GM10248 (cell line): ENCODE measurements at regions of chr2 and their contacts with region 1.

Region 1: DNA sequence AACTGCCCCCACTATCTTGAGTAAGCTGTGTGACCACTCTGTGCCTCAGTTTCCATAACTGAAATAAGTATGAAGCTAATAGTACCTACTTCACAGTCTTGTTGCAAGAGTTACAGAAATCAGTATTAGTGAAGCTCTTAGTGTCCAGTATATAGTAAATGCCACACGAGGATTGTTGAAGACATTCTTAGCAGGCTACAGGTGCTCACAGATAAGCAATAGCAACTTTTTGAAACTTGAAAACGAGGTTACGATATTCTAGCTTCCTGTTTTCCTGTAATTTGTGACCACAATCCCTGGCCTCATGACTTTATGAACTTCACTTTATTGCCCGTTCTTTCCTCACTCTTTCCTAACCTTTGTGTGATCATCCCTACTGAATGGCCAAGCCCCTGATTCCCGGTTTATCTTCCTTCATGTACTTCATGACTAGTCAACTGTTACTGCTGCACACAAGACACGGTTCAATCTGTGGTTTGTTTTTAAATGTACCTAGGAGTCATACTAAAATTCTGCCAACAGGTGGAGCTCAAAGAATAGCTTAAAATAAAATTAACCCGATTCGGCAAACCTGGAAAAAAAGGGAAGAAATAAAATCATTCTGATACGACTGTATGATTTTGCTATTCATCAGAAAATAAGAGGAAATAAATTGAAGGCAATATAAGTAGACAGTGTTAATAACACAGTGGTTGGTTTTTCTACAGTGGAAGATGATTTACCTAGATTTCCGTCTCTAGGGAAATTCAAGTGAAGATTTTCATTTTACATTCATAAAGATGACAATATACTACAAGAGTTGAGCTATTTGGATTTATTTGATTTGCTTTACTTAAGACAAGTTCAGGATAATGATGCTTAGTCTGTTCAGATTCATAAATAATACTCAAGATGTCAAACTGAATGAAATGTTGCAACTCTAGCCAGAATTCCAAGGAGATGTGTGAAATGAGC is 38.1 kb upstream of the STAT1 start:
- DNase-seq: peak; percentile 41
- CTCF ChIP-seq: peak; percentile 52

Region 2: GRCh38 chr2:191029280-191029950 is 22.7 kb before region 1 on chr2:
- CTCF ChIA-PET with region 1: interaction called, 81 read pairs
- POLR2A ChIA-PET with region 1: no interaction called
- DNase-seq: no peak
- CTCF ChIP-seq: no peak

Region 3: GRCh38 chr2:191064590-191064989 is 12.5 kb after region 1 on chr2:
- CTCF ChIA-PET with region 1: interaction called, 51 read pairs
- POLR2A ChIA-PET with region 1: no interaction called
- DNase-seq: no peak
- CTCF ChIP-seq: no peak

Region 4: GRCh38 chr2:191114403-191114886 is 62.3 kb after region 1 on chr2:
- CTCF ChIA-PET with region 1: interaction called, 13 read pairs
- POLR2A ChIA-PET with region 1: no interaction called
- DNase-seq: peak; percentile 48
- CTCF ChIP-seq: no peak

Region 5: GRCh38 chr2:191158193-191158592 is 106.1 kb after region 1 on chr2:
- CTCF ChIA-PET with region 1: interaction called, 187 read pairs
- POLR2A ChIA-PET with region 1: no interaction called
- DNase-seq: no peak
- CTCF ChIP-seq: no peak

Region 6: GRCh38 chr2:191501561-191502168 is 449.6 kb after region 1 on chr2:
- CTCF ChIA-PET with region 1: interaction called, 14 read pairs
- POLR2A ChIA-PET with region 1: no interaction called
- DNase-seq: no peak
- CTCF ChIP-seq: no peak